ENCODE measurements at regions of chr19 and their contacts with region 1.

Region 1: GRCh38 chr19:52942386-52943133 is 19.3 kb upstream of the ZNF888 start:
- DNase-seq: peak; percentile 93 to 98 (median 96)
- H3K4me3 ChIP-seq: peak overlapping the region; percentile 98
- H3K4me3 Mint-ChIP-seq: peak overlapping the region; percentile 90 to 97 (median 95)
- H3K27ac ChIP-seq: peak overlapping the region; percentile 96
- H3K27ac Mint-ChIP-seq: peak overlapping the region; percentile 72 to 98 (median 95)
- H3K4me1 ChIP-seq: peaks cover 7% of the 10 kb centered on the region
- H3K4me1 Mint-ChIP-seq: peaks cover 22 to 36% (median 32%) of the 10 kb centered on the region in 3 donors
- H3K27me3 ChIP-seq: no peaks in the 10 kb centered on the region
- H3K27me3 Mint-ChIP-seq: no peaks in the 10 kb centered on the region

Region 2: DNA sequence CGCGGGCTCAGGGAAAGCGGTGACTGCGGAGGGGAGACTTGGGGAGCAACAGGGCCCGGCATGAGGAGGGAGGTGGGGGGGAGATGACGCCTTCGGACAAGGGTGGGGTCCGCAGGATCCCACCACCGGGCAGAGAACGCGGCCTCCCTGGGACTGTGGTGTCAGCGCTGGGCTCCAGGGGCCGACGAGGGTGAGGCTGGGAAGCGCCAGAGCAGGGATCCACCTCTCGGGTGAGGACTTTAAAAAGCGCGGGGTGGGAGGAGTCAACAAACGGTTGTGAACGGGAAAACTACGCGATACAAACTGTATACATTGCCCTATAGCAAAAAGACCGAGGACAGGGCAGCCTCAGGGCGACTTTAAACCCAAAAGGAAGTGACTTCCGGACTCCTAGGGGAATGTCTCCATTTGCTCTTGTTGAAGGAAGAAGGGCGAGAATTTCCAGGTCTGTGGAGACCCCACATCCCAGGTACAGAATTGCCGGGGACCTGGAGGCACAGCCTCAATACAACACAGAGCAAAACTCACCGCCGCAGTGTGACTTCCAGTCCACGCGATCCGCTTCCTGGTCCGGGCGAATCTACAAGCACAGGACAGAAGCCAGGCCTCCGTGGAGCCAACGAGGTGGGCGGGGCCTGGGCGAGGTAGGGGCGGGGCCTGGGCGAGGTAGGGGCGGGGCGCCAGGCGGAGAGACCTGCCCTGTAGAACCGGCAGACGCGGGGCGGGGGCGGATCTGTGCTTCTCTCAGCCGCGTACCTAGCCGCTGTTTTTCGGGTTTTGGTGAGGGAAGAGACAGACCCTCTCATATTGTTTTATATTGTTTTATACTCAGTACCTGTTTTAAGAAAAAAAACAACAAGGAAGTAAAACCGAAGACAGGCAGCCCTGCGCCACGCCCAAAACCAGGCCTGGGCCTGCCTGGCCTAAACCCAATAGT is 19.5 kb before region 1 on chr19 and contains the start of gene ZNF888:
- CTCF ChIA-PET with region 1: no interaction called
- POLR2A ChIA-PET with region 1: no interaction called
- DNase-seq: peak; percentile 77 to 92 (median 81)
- H3K4me3 ChIP-seq: peak within 1 kb of the TSS; percentile 90
- H3K4me3 Mint-ChIP-seq: peak within 1 kb of the TSS; percentile 92 to 96 (median 94)
- H3K27ac ChIP-seq: peak within 1 kb of the TSS; percentile 89
- H3K27ac Mint-ChIP-seq: peak within 1 kb of the TSS; percentile 53 to 96 (median 92)
- H3K4me1 ChIP-seq: peaks cover 13% of the 10 kb centered on the region
- H3K4me1 Mint-ChIP-seq: peaks cover 30 to 34% (median 32%) of the 10 kb centered on the region in 3 donors
- H3K27me3 ChIP-seq: no peaks in the 10 kb centered on the region
- H3K27me3 Mint-ChIP-seq: peaks cover 0 to 2% of the 10 kb centered on the region in 2 donors
- total RNA-seq, gene ZNF888: 3.9 to 4.4 TPM

Region 3: GRCh38 chr19:52962394-52963246 is 20.1 kb after region 1 on chr19 and contains the start of gene ZNF816:
- CTCF ChIA-PET with region 1: interaction called, 3 read pairs
- POLR2A ChIA-PET with region 1: interaction called, 10 read pairs
- DNase-seq: peak; percentile 96 to 99 (median 99)
- H3K4me3 ChIP-seq: peak within 1 kb of the TSS; percentile 85
- H3K4me3 Mint-ChIP-seq: peak within 1 kb of the TSS; percentile 92 to 97 (median 95)
- H3K27ac ChIP-seq: peak within 1 kb of the TSS; percentile 71
- H3K27ac Mint-ChIP-seq: peak within 1 kb of the TSS; percentile 79 to 96 (median 94)
- H3K4me1 ChIP-seq: peaks cover 17% of the 10 kb centered on the region
- H3K4me1 Mint-ChIP-seq: peaks cover 31 to 46% (median 37%) of the 10 kb centered on the region in 3 donors
- H3K27me3 ChIP-seq: no peaks in the 10 kb centered on the region
- H3K27me3 Mint-ChIP-seq: no peaks in the 10 kb centered on the region
- total RNA-seq, gene ZNF816: 10.6 to 11.0 TPM

Measured in CD8-positive, alpha-beta memory T cell (primary cell).